ENCODE measurements at regions of chr4 and their contacts with region 1.

Region 1: GRCh38 chr4:113394730-113395530 is 345.5 kb downstream of the ANK2 start:
- H3K4me3 ChIP-seq: no peak overlapping the region
- H3K27ac ChIP-seq: no peak overlapping the region
- H3K4me1 ChIP-seq: no peaks in the 10 kb centered on the region
- CTCF ChIP-seq: 0 out of 2 replicates have a peak, but pooled peaks have one; percentile 22

Region 2: DNA sequence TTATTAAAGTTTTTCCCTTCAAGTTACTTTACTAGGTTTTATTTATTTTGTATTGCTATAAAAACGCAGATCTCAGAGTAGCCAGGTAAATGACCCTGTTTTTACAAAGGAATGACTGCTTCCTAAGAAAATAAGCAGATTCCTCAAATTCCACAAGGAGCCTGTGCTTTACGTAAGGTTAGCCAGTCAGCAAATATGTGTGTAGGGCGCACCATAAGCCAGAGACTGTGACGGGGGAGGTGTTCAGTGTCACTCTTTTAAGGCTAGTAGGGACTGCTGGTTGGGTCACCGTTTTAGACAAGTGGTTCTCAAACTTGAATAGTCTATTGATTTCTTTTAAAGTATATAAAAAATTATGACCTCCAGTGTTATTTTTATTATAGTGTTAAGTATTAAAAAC is 225.6 kb before region 1 on chr4:
- CTCF ChIA-PET with region 1: no interaction called
- POLR2A ChIA-PET with region 1: no interaction called
- H3K4me3 ChIP-seq: no peak overlapping the region
- H3K27ac ChIP-seq: no peak overlapping the region
- H3K4me1 ChIP-seq: no peaks in the 10 kb centered on the region
- CTCF ChIP-seq: no peak

Region 3: DNA sequence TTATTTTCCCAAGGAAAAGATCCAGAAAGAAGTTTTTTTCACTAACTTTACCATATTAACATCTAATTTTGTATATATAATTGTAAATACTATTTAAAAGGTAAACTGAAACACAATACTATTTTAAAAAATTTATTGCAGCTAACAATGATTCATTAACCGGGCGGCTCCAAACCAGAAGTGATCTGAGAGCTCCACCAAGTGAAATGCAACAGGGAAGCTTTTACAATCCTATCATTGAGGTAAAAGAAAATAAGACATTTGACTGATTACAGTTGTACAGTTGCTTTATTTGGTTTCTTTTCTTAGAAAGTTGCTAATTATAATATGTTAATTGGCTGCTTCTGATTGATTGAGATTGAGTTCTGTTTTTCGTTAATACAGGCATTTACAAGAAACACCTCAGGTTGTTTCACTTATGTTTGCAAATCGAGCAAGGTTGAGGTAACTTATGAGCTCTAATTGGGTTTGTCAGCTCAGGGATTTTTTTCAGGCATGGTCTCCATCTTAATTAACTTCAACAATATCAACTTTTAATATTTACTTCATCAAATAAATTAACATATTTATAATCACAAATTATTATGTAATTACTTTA is 983.5 kb after region 1 on chr4:
- CTCF ChIA-PET with region 1: interaction called, 21 read pairs
- POLR2A ChIA-PET with region 1: no interaction called
- H3K4me3 ChIP-seq: no peak overlapping the region
- H3K27ac ChIP-seq: no peak overlapping the region
- H3K4me1 ChIP-seq: no peaks in the 10 kb centered on the region
- CTCF ChIP-seq: no peak

Measured in HEK293 (cell line).